Gastrocnemius medialis (tissue), 4 donors: ENCODE measurements at regions of chr3 and their contacts with region 1.

Region 1: DNA sequence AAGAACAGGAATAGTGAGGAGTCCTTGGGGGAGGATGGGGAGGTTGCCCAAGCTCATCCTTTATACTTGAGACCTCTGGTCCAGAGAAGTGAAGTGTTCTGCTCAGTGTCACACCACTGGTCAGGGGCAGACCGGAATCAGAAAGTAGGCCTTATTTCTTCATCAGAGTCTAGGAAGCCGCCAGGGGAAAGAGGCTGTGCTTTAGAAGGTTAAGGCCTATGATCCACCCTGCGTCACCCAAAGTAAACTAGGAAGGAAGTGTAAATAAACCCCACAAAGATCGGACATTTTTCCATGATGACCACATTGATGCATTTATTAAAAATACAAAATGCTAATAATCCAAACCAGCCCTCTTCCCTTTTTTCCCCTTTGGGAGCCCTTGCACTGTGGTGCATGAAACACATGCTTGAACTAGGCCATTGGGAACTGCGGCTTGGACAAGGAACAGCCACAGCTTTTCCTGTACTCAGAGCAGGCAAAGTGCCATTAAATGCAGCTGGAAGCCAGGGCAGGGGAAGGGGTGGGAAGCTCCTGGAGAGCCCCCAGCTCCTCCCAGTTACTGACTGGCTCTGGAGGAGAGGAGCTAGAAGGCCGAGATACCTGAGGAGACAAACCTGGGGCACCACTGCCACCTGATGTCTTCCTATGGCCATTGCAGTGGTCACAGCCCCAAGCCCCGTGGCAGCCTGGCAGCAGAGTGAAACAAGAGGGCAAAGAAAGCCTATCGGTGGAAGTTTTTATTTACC is 37.0 kb downstream of the CDC25A start:
- DNase-seq: peak; percentile 65 to 78
- ATAC-seq: peak; percentile 96 to 99
- H3K4me3 ChIP-seq: no peak overlapping the region
- H3K27ac ChIP-seq: peak overlapping the region; percentile 25 to 62 (median 58)
- H3K4me1 ChIP-seq: peaks cover 0 to 13% of the 10 kb centered on the region in 2 donors
- H3K27me3 ChIP-seq: no peaks in the 10 kb centered on the region
- CTCF ChIP-seq: peak; percentile 81 to 87 (median 86)
- POLR2A ChIP-seq: no peak

Region 2: GRCh38 chr3:47522082-47522987 is 628.9 kb before region 1 on chr3:
- in situ Hi-C with region 1: no loop called
- intact Hi-C with region 1: loop called (anchors 10 kb)
- DNase-seq: peak; percentile 72 to 83
- ATAC-seq: peak; percentile 98 to 99
- H3K4me3 ChIP-seq: no peak overlapping the region
- H3K27ac ChIP-seq: no peak overlapping the region
- H3K4me1 ChIP-seq: peaks cover 4% of the 10 kb centered on the region in 2 donors
- H3K27me3 ChIP-seq: no peaks in the 10 kb centered on the region
- CTCF ChIP-seq: peak; percentile 89 to 95 (median 94)
- POLR2A ChIP-seq: no peak

Region 3: GRCh38 chr3:47824541-47825473 is 326.4 kb before region 1 on chr3:
- in situ Hi-C with region 1: loop called in 3 of 4 experiments (anchors 5 to 10 kb)
- intact Hi-C with region 1: loop called (anchors 1 kb)
- DNase-seq: peak in 1 of 2 donors; percentile 70
- ATAC-seq: peak; percentile 95
- H3K4me3 ChIP-seq: peak overlapping the region; percentile 74 to 95 (median 88)
- H3K27ac ChIP-seq: peak overlapping the region; percentile 86 to 92 (median 89)
- H3K4me1 ChIP-seq: peaks cover 13 to 18% of the 10 kb centered on the region in 2 donors
- H3K27me3 ChIP-seq: no peaks in the 10 kb centered on the region
- CTCF ChIP-seq: peak; percentile 68 to 92 (median 86)
- POLR2A ChIP-seq: peak in 1 of 2 donors; percentile 27

Region 4: DNA sequence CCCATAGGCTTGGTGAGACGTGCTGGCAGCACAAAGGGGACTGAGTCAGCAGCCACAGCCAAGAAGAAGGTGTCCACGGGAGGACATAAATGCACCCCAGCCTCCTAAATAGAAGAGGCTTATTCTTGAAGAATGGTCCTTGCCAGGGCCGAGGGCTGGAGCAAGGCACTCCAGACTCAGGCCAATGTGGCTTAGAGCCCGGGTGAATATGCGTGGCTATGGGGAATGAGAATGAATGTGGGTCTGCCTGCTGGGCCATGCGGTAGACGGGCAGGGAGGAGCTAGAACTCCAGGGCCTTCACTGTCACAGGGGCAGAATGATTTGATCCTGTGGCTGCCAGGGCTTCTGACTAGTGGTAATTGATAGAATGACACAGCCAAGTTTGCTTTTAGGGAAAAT is 314.2 kb before region 1 on chr3:
- in situ Hi-C with region 1: loop called in 2 of 4 experiments (anchors 5 to 10 kb)
- intact Hi-C with region 1: loop called (anchors 1 kb)
- DNase-seq: no peak
- ATAC-seq: no peak
- H3K4me3 ChIP-seq: no peak overlapping the region
- H3K27ac ChIP-seq: peak overlapping the region in 1 of 4 donors; percentile 54
- H3K4me1 ChIP-seq: no peaks in the 10 kb centered on the region
- H3K27me3 ChIP-seq: no peaks in the 10 kb centered on the region
- CTCF ChIP-seq: no peak
- POLR2A ChIP-seq: no peak

Region 5: DNA sequence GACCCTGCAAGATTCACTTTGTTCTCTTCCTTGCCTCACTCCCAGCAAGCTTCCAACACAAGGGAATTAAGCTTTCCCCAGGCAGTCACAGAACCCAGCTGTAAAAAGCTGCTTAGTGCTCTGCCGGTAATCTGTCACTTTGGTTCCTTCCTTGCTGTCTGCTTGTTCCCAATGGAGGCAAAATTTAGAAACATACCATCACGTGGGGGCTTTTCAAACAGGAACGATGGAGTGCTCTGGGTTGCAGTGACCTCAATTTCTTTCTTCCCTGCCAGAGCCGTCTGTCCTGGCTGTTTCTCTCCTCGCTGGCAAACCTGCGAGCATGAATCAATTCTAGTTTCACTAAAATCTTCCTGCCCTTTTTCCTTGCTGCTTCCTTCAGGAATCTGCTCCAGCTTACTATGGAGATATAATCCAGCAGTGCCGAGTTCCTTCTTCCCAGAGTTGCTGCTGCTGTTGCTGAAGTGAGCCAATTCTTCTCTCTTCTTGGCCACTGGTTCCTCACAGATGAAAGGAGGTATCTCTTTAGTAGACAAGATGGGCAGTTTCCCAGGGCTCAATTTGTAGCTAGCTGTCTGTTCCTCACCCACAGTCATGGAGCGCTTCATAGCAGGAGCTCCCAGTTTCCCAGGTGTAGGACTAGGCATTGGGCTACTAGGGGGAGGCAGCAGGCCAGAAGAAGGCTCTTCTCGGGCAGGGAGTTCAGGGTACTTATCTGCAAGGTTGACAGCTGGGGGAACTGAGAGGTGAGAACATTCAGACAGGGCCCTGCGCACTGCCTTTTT is 260.2 kb before region 1 on chr3:
- in situ Hi-C with region 1: no loop called
- intact Hi-C with region 1: loop called (anchors 1 kb)
- DNase-seq: peak; percentile 47 to 50
- ATAC-seq: peak; percentile 74 to 87
- H3K4me3 ChIP-seq: no peak overlapping the region
- H3K27ac ChIP-seq: peak overlapping the region; percentile 41 to 77 (median 67)
- H3K4me1 ChIP-seq: peaks cover 23 to 52% of the 10 kb centered on the region in 2 donors
- H3K27me3 ChIP-seq: no peaks in the 10 kb centered on the region
- CTCF ChIP-seq: no peak
- POLR2A ChIP-seq: no peak

Region 6: DNA sequence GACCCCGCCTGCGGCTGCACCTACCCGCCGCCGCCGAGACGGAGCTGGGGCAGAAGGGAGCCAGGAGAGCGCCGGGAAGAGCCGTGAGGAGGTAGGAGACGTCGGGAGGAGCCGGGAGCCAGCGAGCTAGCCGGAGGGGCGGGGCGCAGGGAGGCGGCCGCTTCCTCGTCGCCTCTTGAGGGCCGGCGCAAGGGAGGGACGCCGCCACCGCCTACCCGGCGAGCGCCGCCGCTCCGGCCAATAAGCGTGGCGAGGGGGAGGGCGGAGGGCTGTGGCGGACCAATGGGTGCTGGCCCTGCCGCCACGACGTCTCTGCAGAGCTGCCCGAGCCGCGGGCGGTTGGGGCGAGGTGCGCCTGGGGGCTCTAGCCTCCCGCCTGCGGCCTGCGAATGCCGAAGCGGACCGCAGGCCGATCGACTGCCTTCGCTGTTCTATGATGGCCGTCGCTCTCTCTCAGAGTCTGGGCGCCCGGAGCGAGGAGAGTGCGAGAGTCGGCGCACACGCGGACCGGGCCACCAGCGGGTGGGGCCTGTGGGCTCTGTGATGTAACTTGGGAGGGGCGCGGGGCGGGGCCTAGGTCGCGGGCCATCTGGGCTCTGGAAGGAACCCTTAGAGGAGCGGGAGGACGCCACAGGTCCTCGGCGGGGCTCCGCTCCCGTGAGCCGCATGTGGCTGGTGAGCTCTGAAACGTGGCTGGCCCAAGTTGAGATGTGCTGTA is 62.3 kb before region 1 on chr3:
- in situ Hi-C with region 1: no loop called
- intact Hi-C with region 1: loop called (anchors 5 kb)
- DNase-seq: peak; percentile 96
- ATAC-seq: peak; percentile 67 to 68
- H3K4me3 ChIP-seq: peak overlapping the region; percentile 85 to 94 (median 87)
- H3K27ac ChIP-seq: peak overlapping the region; percentile 99
- H3K4me1 ChIP-seq: peaks cover 33 to 44% of the 10 kb centered on the region in 2 donors
- H3K27me3 ChIP-seq: no peaks in the 10 kb centered on the region
- CTCF ChIP-seq: no peak
- POLR2A ChIP-seq: peak; percentile 96